HepG2 (cell line): ENCODE measurements at regions of chr19 and their contacts with region 1.

Region 1: GRCh38 chr19:21141787-21142464 is at the start of gene ZNF431:
- DNase-seq: peak; percentile 95
- ATAC-seq: peak; percentile 98
- H3K4me3 ChIP-seq: peak within 1 kb of the TSS; percentile 82 to 97 (median 95)
- H3K27ac ChIP-seq: peak within 1 kb of the TSS; percentile 80
- H3K4me1 ChIP-seq: peaks cover 35% of the 10 kb centered on the region
- H3K27me3 ChIP-seq: no peaks in the 10 kb centered on the region
- CTCF ChIP-seq: 0 out of 2 replicates have a peak, but pooled peaks have one; percentile 5
- EP300 ChIP-seq: no peak
- POLR2A ChIP-seq: peak; percentile 83 to 92
- RAD21 ChIP-seq: no peak
- total RNA-seq, gene ZNF431: 11.8 and 14.6 TPM in 2 replicates

Region 2: GRCh38 chr19:21020298-21021227 is 121.4 kb before region 1 on chr19 and contains the start of gene ZNF430:
- CTCF ChIA-PET with region 1: no interaction called
- POLR2A ChIA-PET with region 1: interaction called, 9 read pairs
- in situ Hi-C with region 1: no loop called
- intact Hi-C with region 1: loop called (anchors 1 kb)
- DNase-seq: peak; percentile 97
- ATAC-seq: peak; percentile 98
- H3K4me3 ChIP-seq: peak within 1 kb of the TSS; percentile 76 to 89 (median 76)
- H3K27ac ChIP-seq: peak within 1 kb of the TSS; percentile 82
- H3K4me1 ChIP-seq: peaks cover 18% of the 10 kb centered on the region
- H3K27me3 ChIP-seq: no peaks in the 10 kb centered on the region; a peak in 2 of 5 replicates
- CTCF ChIP-seq: no peak
- EP300 ChIP-seq: no peak
- POLR2A ChIP-seq: peak; percentile 80 to 90
- RAD21 ChIP-seq: no peak
- total RNA-seq, gene ZNF430: 6.9 and 9.7 TPM in 2 replicates

Region 3: GRCh38 chr19:21047716-21048115 is 94.2 kb before region 1 on chr19:
- CTCF ChIA-PET with region 1: no interaction called
- POLR2A ChIA-PET with region 1: no interaction called
- in situ Hi-C with region 1: no loop called
- intact Hi-C with region 1: no loop called
- DNase-seq: no peak
- ATAC-seq: no peak
- H3K4me3 ChIP-seq: no peak overlapping the region
- H3K27ac ChIP-seq: no peak overlapping the region
- H3K4me1 ChIP-seq: no peaks in the 10 kb centered on the region
- H3K27me3 ChIP-seq: no peaks in the 10 kb centered on the region
- CTCF ChIP-seq: no peak
- EP300 ChIP-seq: no peak
- POLR2A ChIP-seq: no peak
- RAD21 ChIP-seq: no peak

Region 4: GRCh38 chr19:21082011-21082975 is 59.6 kb before region 1 on chr19 and contains the start of gene ZNF714:
- CTCF ChIA-PET with region 1: no interaction called
- POLR2A ChIA-PET with region 1: interaction called, 10 read pairs
- in situ Hi-C with region 1: no loop called
- intact Hi-C with region 1: no loop called
- DNase-seq: peak; percentile 97
- ATAC-seq: peak; percentile 99
- H3K4me3 ChIP-seq: peak within 1 kb of the TSS; percentile 90 to 95 (median 93)
- H3K27ac ChIP-seq: peak within 1 kb of the TSS; percentile 87
- H3K4me1 ChIP-seq: peaks cover 31% of the 10 kb centered on the region
- H3K27me3 ChIP-seq: no peaks in the 10 kb centered on the region; a peak in 1 of 5 replicates
- CTCF ChIP-seq: no peak
- EP300 ChIP-seq: no peak
- POLR2A ChIP-seq: peak; percentile 90 to 98
- RAD21 ChIP-seq: no peak
- total RNA-seq, gene ZNF714: 27.8 and 36.6 TPM in 2 replicates